Cardiac septum (tissue), 1 donor: ENCODE measurements at regions of chr12 and their contacts with region 1.

Region 1: DNA sequence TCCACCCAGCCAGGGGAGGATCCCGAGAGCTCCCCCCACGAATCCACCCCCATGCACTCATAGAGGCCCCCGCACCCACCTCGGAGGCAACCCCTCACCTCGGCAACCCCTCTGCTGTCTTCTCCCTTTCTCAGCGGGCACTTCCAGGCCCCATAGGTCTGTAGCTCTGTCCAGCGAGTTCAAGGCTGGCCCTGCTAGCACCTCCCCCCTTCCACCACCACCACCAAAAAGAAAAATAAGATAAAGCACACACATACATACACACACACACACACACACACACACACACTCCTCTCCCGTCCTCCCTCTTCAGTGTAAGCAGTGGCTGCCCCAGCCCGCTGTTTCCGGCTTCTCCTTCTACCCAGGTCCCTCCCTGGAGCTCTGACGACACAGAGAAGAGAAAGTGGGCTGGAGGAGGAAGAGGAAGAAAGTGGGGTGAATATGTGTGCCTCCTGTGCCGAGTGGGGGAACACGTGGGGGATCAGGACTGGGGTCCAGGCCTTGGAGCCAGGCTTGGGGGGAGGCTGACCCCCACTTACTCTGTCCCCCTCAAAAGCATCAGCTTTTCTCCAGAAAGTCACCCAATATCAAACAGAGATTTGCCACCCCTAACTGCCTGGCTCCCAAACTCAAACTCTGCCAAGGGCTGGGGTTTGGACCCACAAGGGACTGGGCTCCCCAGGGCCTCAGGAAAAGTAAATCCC is at the start of gene STAT6:
- DNase-seq: peak; percentile 92
- total RNA-seq, gene STAT6: 42.1 TPM

Region 2: DNA sequence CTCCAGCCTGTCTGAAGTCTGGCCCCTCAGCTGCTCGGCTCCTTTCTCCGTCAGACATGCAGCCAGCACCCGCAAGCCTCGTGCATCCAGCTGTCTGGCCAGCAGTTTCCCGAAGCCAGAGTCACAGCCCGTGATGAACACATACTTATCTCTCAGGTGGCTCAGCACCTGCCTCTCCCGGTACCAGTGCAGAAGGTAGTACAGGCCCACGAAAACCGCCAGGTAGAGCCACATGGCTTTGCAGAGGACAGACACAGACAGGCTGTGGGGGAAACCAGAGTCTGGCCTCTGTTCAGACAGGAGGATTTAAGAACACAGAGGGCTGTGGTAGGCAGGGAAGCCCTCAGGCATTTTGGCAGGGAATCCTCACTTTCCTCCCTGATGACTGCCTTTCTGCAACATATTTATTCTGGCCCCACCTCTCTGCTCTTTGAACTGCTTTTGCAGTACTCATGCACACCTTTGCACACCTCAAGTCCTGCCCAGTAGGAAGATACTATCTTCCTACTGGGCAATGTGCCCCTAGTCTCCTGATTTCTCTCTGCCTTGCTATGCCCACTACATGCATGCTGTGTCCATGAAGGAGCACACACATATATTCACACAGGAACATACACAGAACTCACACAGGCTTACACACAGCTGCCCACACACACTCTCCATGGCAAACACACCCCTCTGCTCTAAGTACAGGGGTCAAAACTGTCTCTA is 153.8 kb before region 1 on chr12 and contains the start of gene RDH16:
- intact Hi-C with region 1: no loop called
- DNase-seq: no peak
- total RNA-seq, gene RDH16: 0.22 TPM

Region 3: DNA sequence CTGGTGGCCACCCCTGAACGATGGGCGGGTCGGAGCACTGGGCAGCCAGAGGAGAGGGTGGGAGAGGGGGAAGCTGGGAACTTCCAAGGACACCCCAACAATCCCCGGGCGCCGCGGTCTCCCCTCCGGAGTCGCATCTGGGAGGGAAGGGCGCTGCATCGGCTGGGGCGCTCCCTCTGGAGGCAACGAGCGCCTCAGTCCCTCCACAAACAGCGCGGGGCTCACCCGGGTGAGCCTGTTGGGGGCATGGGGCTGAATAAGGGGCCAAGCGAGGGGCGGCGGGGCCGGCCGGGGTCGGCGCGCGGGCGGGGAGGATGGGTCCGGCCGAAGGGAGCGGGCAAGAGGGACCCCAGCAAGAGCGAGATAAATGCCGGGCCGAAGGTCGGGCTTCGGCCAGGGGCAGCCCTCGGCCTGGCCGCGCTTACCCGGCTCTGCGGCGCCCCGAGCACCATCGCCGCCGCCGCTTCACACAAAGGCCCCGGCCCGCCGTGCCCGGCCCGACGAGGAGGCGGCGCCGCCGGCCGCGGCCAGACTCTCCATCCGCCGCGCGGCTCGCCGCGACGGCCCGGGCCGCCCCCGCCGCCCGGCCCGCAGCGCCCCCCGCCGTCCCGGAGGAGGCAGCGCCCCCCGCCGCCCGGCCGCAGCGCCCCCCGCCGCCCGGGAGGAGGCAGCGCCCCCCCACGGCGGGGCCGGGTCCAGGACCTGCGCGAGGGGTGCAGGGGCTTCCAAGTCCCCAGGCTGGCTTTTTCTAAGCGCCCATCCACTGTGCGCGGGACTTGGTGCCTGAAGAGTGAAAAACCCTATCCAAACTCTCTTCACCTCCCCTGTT is 105.0 kb before region 1 on chr12 and contains the start of gene ZBTB39:
- intact Hi-C with region 1: loop called (anchors 5 kb)
- DNase-seq: no peak
- total RNA-seq, gene ZBTB39: 3.5 TPM

Region 4: DNA sequence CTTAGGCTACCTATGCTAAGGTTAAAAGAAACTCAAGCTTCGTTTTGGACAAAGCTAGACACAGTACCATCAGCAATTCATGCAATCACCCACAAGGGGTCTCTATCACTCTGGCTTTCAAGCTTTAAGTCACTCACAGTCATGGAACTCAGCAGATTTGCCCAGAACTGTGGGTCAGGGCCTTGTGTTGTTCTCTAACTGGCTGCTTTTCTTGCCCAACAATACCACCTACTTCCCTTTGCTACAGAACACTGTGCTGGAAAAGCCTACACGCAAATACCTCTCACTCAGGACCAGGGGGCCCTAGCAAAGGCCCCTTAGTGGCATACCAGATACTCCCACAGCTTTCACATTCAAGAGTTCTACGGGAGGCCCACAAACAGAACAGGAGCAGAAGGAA is 41.7 kb before region 1 on chr12:
- intact Hi-C with region 1: loop called (anchors 1 kb)
- DNase-seq: no peak

Region 5: DNA sequence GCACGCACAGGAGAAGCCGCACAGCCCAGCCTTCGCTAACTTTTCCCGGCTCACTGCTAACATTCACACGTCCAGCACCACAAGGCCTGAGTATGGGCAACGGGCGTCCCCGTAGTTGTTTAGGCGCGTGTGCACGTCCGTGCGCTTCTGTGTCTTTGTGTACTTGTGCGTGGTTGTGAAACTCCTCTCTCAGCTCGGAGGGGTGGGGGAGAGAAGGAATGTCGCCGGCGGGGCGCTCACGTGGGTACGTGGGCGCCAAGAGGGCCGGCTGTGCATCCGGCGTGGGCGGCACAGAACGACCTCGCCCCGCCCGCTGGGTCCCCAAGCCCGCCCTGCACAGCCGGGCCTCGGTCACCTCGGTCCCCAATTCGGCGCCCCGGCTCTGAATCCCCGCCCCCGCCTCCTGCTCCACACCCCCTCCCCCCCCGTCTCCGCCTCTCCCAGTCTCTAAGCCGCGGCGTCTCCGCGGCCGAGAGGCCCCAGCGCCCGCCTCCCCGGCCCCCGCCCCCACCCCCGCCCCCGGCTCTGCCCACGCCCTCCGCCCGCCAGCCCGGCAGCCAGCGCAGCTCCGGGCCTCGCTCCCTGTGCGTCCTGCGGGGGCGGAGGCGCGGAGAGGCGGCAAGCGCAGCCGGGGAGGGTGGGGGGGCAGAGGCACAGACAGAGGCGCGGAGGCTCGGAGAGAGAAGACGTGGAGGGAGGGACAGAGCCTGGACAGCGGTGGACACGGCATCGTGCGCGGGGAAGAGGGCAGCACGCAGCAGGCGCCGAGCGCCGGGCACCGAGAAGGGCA is 22.5 kb before region 1 on chr12 and contains the start of gene NAB2:
- intact Hi-C with region 1: loop called (anchors 1 kb)
- DNase-seq: peak; percentile 97
- total RNA-seq, gene NAB2: 37.9 TPM

Region 6: DNA sequence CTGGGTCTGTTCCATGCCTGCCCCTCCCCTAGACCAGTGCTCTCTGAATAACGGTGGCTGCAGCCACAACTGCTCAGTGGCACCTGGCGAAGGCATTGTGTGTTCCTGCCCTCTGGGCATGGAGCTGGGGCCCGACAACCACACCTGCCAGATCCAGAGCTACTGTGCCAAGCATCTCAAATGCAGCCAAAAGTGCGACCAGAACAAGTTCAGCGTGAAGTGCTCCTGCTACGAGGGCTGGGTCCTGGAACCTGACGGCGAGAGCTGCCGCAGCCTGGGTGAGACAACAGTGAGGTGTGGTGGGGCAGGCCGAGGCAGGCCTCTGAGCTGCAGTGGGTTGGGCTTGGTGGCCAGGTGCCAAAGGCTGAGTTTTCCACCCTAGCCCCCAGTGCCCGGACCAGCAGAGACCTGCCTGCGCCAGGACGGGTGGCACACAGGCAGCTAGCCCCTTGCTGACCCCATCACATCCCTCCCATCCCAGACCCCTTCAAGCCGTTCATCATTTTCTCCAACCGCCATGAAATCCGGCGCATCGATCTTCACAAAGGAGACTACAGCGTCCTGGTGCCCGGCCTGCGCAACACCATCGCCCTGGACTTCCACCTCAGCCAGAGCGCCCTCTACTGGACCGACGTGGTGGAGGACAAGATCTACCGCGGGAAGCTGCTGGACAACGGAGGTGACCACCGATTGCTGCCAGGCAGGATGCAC is 64.4 kb after region 1 on chr12:
- intact Hi-C with region 1: no loop called
- DNase-seq: no peak